ENCODE measurements at regions of chr7 and their contacts with region 1.

Region 1: GRCh38 chr7:22193450-22193983 is 163.4 kb downstream of the RAPGEF5 start:
- DNase-seq: peak; percentile 63 to 95 (median 72)

Region 2: GRCh38 chr7:22156205-22156604 is 37.3 kb before region 1 on chr7:
- intact Hi-C with region 1: loop called (anchors 5 kb)
- DNase-seq: peak in 1 of 10 donors; percentile 67

Region 3: GRCh38 chr7:22238354-22239311 is 45.1 kb after region 1 on chr7:
- intact Hi-C with region 1: no loop called
- DNase-seq: no peak

Region 4: DNA sequence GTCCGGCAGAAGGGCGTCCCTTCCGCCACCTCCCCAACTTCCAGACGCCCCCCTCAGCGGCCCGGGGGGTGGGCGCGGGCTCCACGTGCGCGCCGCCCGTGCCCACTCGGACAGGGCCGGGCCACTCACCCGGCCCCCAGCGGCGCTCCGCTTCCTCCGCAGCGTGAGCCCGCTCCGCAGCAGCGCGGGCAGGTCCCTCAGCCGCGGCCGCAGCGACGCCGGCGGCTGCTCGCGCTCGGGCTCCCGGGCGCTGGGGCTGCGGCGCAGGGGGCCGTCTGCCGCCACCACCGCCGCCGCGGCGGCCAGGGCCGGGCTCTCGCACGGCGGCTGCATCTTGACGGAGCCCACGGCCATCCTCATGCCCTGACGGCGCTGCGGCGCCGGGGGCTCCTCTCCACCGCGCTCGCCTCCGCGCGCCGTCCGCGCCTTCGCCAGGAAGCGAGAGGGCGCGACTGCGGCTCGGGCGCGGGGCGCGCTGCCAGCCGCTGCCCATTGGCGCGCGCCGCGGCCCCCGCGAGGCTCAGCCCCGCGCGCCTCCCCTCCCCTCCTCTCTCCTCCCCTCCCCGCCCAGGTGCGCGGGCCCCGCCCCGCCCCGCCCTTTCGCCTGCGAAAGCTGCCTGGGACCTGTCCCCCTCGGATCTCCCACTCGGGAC is 163.3 kb after region 1 on chr7 and contains the start of gene RAPGEF5:
- intact Hi-C with region 1: no loop called
- DNase-seq: peak in 4 of 10 donors; percentile 18 to 84 (median 50)

Region 5: DNA sequence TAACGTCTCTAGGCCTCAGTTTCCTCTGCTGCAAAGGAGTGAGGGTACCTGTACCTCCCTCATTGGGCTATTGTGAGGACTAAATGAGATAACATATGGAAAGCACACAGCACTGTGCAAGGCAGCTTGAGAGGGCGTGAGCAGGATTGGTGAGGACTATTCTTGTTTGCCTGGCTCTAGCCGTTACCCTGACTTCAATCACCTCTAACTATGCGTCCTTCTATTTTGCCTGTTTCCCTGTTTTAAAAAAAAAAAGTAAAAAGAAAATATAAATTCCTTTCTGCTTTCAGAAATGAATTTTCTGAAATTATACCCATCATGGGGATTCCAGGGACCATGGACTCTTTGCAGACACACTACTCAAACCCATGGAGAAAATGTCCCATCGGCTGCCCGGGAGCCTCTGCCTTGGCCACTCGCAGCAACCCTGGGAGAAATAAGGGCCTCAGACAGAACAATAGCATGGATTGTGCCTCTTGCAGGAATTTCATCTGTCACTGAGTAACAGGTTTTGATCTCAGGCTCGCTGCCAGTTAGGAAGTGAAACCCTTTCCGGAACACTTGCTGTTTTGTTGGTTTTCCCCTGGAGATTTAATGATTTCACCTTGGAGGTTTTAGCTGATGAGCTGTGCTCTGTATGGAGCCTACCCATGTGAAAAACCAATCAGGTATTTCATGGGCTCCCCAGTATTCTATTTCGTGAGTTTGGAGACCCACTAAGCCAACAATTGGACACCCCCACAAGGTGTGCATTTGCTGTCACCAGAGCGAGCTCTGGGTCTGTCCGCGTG is 250.9 kb after region 1 on chr7:
- intact Hi-C with region 1: no loop called
- DNase-seq: peak in 1 of 10 donors; percentile 26